Calu3 (cell line): ENCODE measurements at regions of chrX and their contacts with region 1.

Region 1: GRCh38 chrX:77910108-77910840 is at the start of gene ATP7A:
- DNase-seq: peak; percentile 89
- H3K4me3 Mint-ChIP-seq: peak within 1 kb of the TSS; percentile 96
- H3K27ac Mint-ChIP-seq: peak within 1 kb of the TSS; percentile 93
- H3K4me1 Mint-ChIP-seq: peaks cover 17% of the 10 kb centered on the region
- H3K27me3 Mint-ChIP-seq: no peaks in the 10 kb centered on the region
- CTCF ChIP-seq: peak; percentile 62
- total RNA-seq, gene ATP7A: 14.8 and 15.2 TPM in 2 replicates

Region 2: DNA sequence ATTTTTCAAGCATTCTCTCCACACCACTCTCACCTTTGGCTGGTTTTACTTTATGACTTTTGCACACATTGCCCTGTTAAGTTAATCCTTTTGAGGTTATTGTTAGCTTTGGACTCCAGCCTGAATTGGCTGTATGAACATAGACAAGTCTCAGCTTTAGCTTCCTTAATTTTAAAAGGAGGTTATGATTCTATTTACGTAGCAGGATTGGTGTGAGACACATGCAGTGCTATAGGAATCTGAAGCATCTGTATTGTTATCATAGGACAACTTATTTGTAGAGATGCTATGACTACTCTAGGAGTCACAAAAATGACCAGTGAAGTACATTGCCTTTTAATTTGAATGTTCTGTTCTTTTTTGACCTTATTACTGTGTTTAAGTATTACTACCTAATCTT is 43.4 kb after region 1 on chrX:
- CTCF ChIA-PET with region 1: no interaction called
- intact Hi-C with region 1: loop called (anchors 5 kb)
- DNase-seq: no peak
- H3K4me3 Mint-ChIP-seq: no peak overlapping the region
- H3K27ac Mint-ChIP-seq: no peak overlapping the region
- H3K4me1 Mint-ChIP-seq: peaks cover 9% of the 10 kb centered on the region
- H3K27me3 Mint-ChIP-seq: no peaks in the 10 kb centered on the region
- CTCF ChIP-seq: no peak

Region 3: DNA sequence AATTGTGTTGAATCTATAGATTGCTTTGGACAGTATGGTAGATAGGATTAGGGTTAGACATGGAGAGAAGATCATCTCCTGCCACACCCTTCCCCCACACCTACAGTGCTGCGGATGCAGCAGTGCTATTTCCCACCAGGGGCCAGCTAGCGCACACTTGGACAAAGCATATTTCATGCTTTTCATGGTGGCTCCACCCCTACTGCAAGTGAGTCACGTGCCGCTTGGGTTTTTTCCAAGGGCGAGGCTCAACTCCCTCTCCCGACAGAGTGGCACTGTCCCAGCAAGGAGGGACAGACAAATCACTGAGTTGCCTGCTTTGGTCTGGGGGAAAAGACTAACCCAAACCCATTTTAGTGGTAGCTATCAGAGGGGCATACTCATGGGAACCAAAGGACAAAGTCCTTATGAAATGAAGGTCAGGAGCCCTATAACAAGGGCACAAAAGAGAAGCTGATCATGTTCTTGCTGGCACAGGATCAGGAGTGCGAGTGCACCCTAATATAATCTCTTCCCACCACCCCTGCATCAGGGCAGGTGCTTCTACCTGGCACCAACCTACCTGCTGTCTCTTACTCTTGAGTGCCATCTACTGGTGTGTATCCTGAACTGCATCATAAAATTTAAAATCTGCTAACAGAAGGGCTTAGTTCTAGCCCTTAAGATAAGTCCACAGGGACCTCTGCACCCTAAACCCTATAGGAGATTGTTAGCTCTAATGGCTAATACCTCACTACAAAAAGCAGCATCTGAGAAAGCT is 114.3 kb after region 1 on chrX:
- CTCF ChIA-PET with region 1: interaction called, 13 read pairs
- intact Hi-C with region 1: loop called (anchors 2 kb)
- DNase-seq: peak; percentile 67
- H3K4me3 Mint-ChIP-seq: peak overlapping the region; percentile 51
- H3K27ac Mint-ChIP-seq: peak overlapping the region; percentile 79
- H3K4me1 Mint-ChIP-seq: peaks cover 16% of the 10 kb centered on the region
- H3K27me3 Mint-ChIP-seq: no peaks in the 10 kb centered on the region
- CTCF ChIP-seq: peak; percentile 73

Region 4: GRCh38 chrX:78092296-78092695 is 182.0 kb after region 1 on chrX:
- CTCF ChIA-PET with region 1: no interaction called
- intact Hi-C with region 1: loop called (anchors 5 kb)
- DNase-seq: peak; percentile 59
- H3K4me3 Mint-ChIP-seq: no peak overlapping the region
- H3K27ac Mint-ChIP-seq: no peak overlapping the region
- H3K4me1 Mint-ChIP-seq: peaks cover 7% of the 10 kb centered on the region
- H3K27me3 Mint-ChIP-seq: no peaks in the 10 kb centered on the region
- CTCF ChIP-seq: peak; percentile 61